Activated B cell treated with CpG ODN at 0.5 μM for 24 hours (primary cell): ENCODE measurements at regions of chr9 and their contacts with region 1.

Region 1: DNA sequence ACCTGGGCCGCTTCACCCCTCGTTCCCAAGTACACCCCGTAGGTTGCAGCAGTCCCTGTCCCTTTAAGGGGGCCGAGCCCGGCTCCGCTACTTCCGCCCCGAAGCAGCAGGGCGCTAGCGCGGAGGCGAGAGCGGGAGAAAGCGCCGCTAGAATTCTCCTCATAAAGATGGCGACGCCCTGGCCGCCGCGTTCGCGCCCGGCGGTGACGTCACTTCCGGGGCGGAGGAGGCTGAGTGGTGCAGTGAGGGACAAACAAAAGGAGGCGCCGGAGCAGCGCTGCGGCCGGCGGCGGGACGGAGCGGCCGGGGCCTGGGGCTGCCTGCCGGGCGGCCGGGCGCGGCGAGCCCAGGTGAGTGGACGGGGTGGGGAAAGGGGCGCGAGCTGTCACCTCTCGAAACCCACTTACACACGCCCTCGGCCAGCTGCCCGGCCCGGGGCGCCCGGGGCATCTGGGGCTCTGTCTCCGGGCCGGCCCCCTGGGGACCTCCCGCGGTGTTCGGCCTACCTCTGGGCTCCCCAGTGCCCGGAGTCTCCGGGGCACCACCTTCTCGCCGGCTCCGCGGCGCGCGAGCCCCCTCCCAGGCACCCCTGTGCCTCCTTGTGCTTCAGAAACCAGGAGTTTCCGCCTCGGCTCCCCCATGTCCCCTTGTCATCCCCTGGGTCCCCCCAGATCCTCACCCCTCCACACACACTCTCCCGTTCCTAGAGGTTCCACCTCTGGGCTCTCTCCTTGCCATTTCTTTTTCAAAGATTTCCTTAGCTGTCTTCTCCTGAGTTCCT is at the starts of genes KYAT1 and LRRC8A:
- DNase-seq: peak; percentile 98
- ATAC-seq: peak; percentile 90
- H3K4me3 Mint-ChIP-seq: peak within 1 kb of the TSS; percentile 94
- H3K27ac Mint-ChIP-seq: peak within 1 kb of the TSS; percentile 84
- H3K4me1 Mint-ChIP-seq: peaks cover 34% of the 10 kb centered on the region
- H3K27me3 Mint-ChIP-seq: no peaks in the 10 kb centered on the region
- CTCF ChIP-seq: no peak
- total RNA-seq, gene KYAT1: 2.0 and 4.3 TPM in 2 replicates
- total RNA-seq, gene LRRC8A: 9.0 and 10.4 TPM in 2 replicates

Region 2: DNA sequence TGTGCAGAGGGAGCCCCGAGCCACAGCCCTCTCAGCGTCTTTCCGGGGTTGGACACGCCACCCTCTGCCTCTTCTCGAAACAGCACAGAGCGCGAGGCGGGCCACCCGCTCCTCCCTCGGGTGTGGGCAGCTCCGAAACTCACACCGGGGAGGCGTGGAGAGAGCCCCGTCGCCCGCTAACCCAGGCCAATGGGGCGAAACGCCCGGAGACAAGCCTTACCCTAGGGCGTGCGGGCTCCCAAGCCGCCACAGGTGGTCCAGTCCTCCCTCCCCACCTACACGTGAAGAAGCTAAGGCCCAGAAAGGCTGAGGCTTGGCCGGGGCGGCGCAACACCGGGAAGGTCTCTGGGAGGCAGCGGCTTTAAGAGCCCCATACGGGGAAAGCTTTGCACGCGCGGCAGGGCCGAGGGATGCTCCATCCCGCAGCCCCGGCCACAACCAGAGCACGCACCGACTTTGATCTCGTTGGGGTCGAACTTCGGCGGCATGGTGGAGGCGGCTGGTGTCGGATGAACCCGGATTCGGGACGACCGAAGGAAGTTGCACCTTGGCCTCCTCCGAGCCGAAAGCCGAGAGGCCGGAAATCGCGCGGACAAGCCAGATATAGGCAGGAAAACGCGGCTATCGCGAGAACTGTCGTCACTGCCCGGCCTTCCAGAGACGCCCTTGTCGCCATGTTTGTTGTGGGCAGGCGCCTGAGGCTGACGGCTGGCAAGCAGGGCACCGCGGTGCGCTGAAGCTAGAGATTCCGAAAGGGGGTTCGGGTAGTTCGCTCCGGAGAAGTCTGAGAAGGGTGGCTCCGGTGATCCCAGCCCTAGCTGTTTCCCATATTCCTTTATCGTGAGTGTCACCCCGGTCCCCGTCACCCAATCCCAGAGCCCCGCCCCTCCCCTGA is 1431.0 kb before region 1 on chr9 and contains the starts of genes LRSAM1 and RPL12:
- CTCF ChIA-PET with region 1: no interaction called
- POLR2A ChIA-PET with region 1: no interaction called
- intact Hi-C with region 1: loop called (anchors 5 kb)
- DNase-seq: peak; percentile 99
- ATAC-seq: peak; percentile 66
- H3K4me3 Mint-ChIP-seq: peak within 1 kb of the TSS; percentile 96
- H3K27ac Mint-ChIP-seq: peak within 1 kb of the TSS; percentile 96
- H3K4me1 Mint-ChIP-seq: peaks cover 68% of the 10 kb centered on the region
- H3K27me3 Mint-ChIP-seq: no peaks in the 10 kb centered on the region
- CTCF ChIP-seq: no peak
- total RNA-seq, gene LRSAM1: 19.4 and 23.9 TPM in 2 replicates
- total RNA-seq, gene RPL12: 2,278 and 2,307 TPM in 2 replicates

Region 3: DNA sequence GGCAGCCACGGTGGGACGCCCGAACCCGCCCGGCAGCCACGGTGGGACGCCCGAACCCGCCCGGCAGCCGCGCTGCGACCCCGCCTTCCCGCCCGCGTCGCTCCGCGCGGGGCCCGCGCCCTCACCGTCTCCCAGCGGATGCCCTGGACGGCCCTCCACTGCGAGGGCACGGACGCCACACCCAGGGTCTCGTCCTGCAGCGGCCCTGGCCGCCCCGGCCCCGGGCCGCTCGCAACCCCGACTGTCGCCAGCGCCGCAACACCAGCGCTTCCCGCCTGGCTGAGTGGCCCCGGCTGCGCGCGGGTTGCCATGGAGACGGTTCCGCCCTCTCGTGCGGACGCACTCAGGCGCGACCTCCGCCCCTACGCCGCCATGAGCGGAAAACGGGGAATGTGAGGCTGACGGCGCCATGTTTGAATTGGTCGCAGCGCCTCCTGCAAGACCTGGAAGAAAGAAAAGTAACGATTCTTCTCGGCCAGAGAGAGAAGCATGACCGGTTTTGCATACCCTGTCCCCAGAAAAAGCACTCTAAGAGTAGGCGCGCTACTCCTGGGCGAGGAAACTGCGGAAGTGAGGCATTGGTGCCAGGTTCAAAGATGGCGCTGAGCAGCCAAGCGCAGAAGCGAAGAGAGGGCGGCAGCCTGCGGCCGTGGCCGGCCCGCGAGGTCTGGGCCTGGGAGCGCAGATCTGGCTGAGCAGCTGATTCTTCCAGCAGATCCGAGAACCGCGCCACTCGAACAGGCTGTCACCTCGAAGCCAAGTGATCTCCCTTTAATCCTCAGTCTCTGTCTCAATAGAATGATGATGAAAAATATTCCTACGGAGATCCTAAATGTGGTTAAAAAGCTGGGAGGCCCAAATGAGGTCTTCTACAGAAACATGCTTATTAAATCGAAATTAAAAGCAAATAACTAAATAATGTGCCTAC is 225.4 kb before region 1 on chr9 and contains the start of gene DYNC2I2:
- CTCF ChIA-PET with region 1: no interaction called
- POLR2A ChIA-PET with region 1: no interaction called
- intact Hi-C with region 1: loop called (anchors 5 kb)
- DNase-seq: peak; percentile 80
- ATAC-seq: peak; percentile 73
- H3K4me3 Mint-ChIP-seq: peak within 1 kb of the TSS; percentile 92
- H3K27ac Mint-ChIP-seq: peak within 1 kb of the TSS; percentile 99
- H3K4me1 Mint-ChIP-seq: peaks cover 18% of the 10 kb centered on the region
- H3K27me3 Mint-ChIP-seq: no peaks in the 10 kb centered on the region
- CTCF ChIP-seq: no peak
- total RNA-seq, gene DYNC2I2: 58.0 and 60.2 TPM in 2 replicates

Region 4: DNA sequence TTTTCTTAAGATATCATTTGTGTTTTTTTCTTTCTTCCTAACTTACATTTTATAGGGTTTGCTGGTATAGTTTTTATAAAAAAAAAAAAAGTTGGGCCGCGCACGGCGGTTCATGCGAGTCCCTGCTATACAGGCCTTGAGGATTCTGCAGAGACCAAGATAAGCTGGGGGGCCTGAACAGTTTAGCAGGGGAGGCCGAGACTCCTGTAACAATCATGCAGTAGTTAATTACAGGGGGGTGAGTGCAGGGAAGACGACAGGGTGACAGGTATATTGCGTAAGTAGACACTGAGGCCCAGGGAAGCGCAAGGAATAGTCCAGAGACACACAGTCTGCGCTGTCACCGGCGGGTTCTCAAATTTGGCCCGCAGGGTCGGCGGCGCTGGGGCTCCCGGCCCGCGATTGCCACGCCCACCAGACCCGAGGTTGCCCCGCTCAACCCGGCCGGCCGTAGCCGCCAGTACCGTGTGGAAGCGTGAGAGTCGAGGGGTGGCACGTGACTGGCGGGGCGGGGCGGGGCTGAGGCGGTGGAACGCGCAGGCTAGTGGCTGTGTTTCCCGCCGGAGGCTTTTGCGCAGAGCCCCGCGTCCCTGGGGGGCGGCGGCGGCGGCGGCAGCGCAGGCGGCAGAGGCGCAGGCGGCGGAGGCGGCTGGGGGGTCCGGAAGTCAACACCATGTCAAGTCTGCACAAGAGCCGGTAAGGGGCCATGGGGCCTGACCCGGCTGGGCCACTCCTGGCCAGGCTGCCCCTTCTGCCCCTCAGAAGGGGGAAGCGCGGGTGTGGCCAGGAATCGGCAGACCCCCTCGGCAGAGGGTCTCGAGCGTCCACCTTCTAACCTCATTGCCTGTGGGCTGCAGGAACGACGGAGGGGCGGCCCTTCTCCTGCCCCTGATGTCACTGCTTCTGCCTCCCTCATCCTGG is 95.2 kb before region 1 on chr9 and contains the start of gene TBC1D13:
- CTCF ChIA-PET with region 1: no interaction called
- POLR2A ChIA-PET with region 1: no interaction called
- intact Hi-C with region 1: loop called (anchors 1 kb)
- DNase-seq: peak; percentile 96
- ATAC-seq: peak; percentile 95
- H3K4me3 Mint-ChIP-seq: peak within 1 kb of the TSS; percentile 95
- H3K27ac Mint-ChIP-seq: peak within 1 kb of the TSS; percentile 85
- H3K4me1 Mint-ChIP-seq: peaks cover 17% of the 10 kb centered on the region
- H3K27me3 Mint-ChIP-seq: no peaks in the 10 kb centered on the region
- CTCF ChIP-seq: no peak
- total RNA-seq, gene TBC1D13: 21.5 and 26.4 TPM in 2 replicates

Region 5: DNA sequence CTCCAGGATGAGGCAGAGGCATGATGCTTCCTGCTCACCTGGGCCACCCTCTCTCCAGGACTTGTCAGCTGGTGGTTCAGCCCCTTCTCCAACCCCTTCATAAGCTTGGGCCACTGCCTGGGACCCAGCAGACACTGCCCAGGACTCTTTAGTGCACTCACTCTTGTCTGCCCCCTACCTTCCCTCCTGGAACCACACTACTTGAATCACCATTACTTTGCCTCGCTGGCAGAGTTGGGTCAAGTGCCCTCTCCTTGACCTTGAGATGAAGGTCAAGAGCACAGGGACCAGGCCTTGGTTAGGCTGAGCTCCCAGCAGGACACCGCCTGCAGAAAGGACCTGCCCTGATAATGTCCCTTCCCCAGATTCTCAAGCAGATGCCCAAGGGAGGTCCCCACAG is 72.3 kb before region 1 on chr9:
- CTCF ChIA-PET with region 1: no interaction called
- POLR2A ChIA-PET with region 1: no interaction called
- intact Hi-C with region 1: no loop called
- DNase-seq: no peak
- ATAC-seq: no peak
- H3K4me3 Mint-ChIP-seq: no peak overlapping the region
- H3K27ac Mint-ChIP-seq: no peak overlapping the region
- H3K4me1 Mint-ChIP-seq: no peaks in the 10 kb centered on the region
- H3K27me3 Mint-ChIP-seq: no peaks in the 10 kb centered on the region
- CTCF ChIP-seq: no peak

Region 6: GRCh38 chr9:128863647-128864046 is 18.4 kb before region 1 on chr9:
- CTCF ChIA-PET with region 1: interaction called, 7 read pairs
- POLR2A ChIA-PET with region 1: interaction called, 6 read pairs
- intact Hi-C with region 1: loop called (anchors 1 kb)
- DNase-seq: peak; percentile 80
- ATAC-seq: peak; percentile 99
- H3K4me3 Mint-ChIP-seq: no peak overlapping the region
- H3K27ac Mint-ChIP-seq: no peak overlapping the region
- H3K4me1 Mint-ChIP-seq: peaks cover 6% of the 10 kb centered on the region
- H3K27me3 Mint-ChIP-seq: no peaks in the 10 kb centered on the region
- CTCF ChIP-seq: peak; percentile 60

Region 7: GRCh38 chr9:128947422-128948301 is 65.6 kb after region 1 on chr9 and contains the starts of genes DOLK and NUP188:
- CTCF ChIA-PET with region 1: no interaction called
- POLR2A ChIA-PET with region 1: interaction called, 4 read pairs
- intact Hi-C with region 1: loop called (anchors 1 kb)
- DNase-seq: peak; percentile 100
- ATAC-seq: peak; percentile 86
- H3K4me3 Mint-ChIP-seq: peak within 1 kb of the TSS; percentile 98
- H3K27ac Mint-ChIP-seq: peak within 1 kb of the TSS; percentile 97
- H3K4me1 Mint-ChIP-seq: peaks cover 29% of the 10 kb centered on the region
- H3K27me3 Mint-ChIP-seq: no peaks in the 10 kb centered on the region
- CTCF ChIP-seq: no peak
- total RNA-seq, gene DOLK: 9.0 and 10.3 TPM in 2 replicates
- total RNA-seq, gene NUP188: 76.9 and 103 TPM in 2 replicates